ENCODE measurements at regions of chr10 and their contacts with region 1.

Region 1: GRCh38 chr10:102245101-102245931 is at the start of gene GBF1:
- DNase-seq: peak; percentile 96 to 97
- H3K4me3 ChIP-seq: peak within 1 kb of the TSS; percentile 73
- H3K4me3 Mint-ChIP-seq: peak within 1 kb of the TSS; percentile 94
- H3K27ac Mint-ChIP-seq: peak within 1 kb of the TSS; percentile 87
- H3K4me1 ChIP-seq: peaks cover 19% of the 10 kb centered on the region
- H3K4me1 Mint-ChIP-seq: peaks cover 46% of the 10 kb centered on the region
- H3K27me3 ChIP-seq: no peaks in the 10 kb centered on the region
- H3K27me3 Mint-ChIP-seq: peaks cover 3% of the 10 kb centered on the region
- CTCF ChIP-seq: no peak
- total RNA-seq, gene GBF1: 69.1 and 69.8 TPM in 2 replicates

Region 2: GRCh38 chr10:100803492-100803891 is 1441.8 kb before region 1 on chr10:
- CTCF ChIA-PET with region 1: no interaction called
- POLR2A ChIA-PET with region 1: no interaction called
- intact Hi-C with region 1: no loop called
- DNase-seq: no peak
- H3K4me3 ChIP-seq: no peak overlapping the region
- H3K4me3 Mint-ChIP-seq: no peak overlapping the region
- H3K27ac Mint-ChIP-seq: no peak overlapping the region
- H3K4me1 ChIP-seq: no peaks in the 10 kb centered on the region
- H3K4me1 Mint-ChIP-seq: peaks cover 14% of the 10 kb centered on the region
- H3K27me3 ChIP-seq: no peaks in the 10 kb centered on the region; the same call in 1 of the 2 replicates
- H3K27me3 Mint-ChIP-seq: peaks cover 14% of the 10 kb centered on the region
- CTCF ChIP-seq: no peak

Region 3: GRCh38 chr10:101478956-101479355 is 766.4 kb before region 1 on chr10:
- CTCF ChIA-PET with region 1: no interaction called
- POLR2A ChIA-PET with region 1: no interaction called
- intact Hi-C with region 1: no loop called
- DNase-seq: no peak
- H3K4me3 ChIP-seq: no peak overlapping the region
- H3K4me3 Mint-ChIP-seq: no peak overlapping the region
- H3K27ac Mint-ChIP-seq: no peak overlapping the region
- H3K4me1 ChIP-seq: no peaks in the 10 kb centered on the region
- H3K4me1 Mint-ChIP-seq: no peaks in the 10 kb centered on the region
- H3K27me3 ChIP-seq: no peaks in the 10 kb centered on the region
- H3K27me3 Mint-ChIP-seq: no peaks in the 10 kb centered on the region
- CTCF ChIP-seq: no peak

Region 4: GRCh38 chr10:102151774-102152544 is 93.4 kb before region 1 on chr10 and contains the start of gene NOLC1:
- CTCF ChIA-PET with region 1: no interaction called
- POLR2A ChIA-PET with region 1: interaction called, 5 read pairs
- intact Hi-C with region 1: loop called (anchors 5 kb)
- DNase-seq: peak; percentile 99
- H3K4me3 ChIP-seq: peak within 1 kb of the TSS; percentile 87
- H3K4me3 Mint-ChIP-seq: peak within 1 kb of the TSS; percentile 91
- H3K27ac Mint-ChIP-seq: peak within 1 kb of the TSS; percentile 99
- H3K4me1 ChIP-seq: peaks cover 26% of the 10 kb centered on the region
- H3K4me1 Mint-ChIP-seq: peaks cover 30% of the 10 kb centered on the region
- H3K27me3 ChIP-seq: no peaks in the 10 kb centered on the region
- H3K27me3 Mint-ChIP-seq: no peaks in the 10 kb centered on the region
- CTCF ChIP-seq: no peak
- total RNA-seq, gene NOLC1: 137 and 147 TPM in 2 replicates

Region 5: DNA sequence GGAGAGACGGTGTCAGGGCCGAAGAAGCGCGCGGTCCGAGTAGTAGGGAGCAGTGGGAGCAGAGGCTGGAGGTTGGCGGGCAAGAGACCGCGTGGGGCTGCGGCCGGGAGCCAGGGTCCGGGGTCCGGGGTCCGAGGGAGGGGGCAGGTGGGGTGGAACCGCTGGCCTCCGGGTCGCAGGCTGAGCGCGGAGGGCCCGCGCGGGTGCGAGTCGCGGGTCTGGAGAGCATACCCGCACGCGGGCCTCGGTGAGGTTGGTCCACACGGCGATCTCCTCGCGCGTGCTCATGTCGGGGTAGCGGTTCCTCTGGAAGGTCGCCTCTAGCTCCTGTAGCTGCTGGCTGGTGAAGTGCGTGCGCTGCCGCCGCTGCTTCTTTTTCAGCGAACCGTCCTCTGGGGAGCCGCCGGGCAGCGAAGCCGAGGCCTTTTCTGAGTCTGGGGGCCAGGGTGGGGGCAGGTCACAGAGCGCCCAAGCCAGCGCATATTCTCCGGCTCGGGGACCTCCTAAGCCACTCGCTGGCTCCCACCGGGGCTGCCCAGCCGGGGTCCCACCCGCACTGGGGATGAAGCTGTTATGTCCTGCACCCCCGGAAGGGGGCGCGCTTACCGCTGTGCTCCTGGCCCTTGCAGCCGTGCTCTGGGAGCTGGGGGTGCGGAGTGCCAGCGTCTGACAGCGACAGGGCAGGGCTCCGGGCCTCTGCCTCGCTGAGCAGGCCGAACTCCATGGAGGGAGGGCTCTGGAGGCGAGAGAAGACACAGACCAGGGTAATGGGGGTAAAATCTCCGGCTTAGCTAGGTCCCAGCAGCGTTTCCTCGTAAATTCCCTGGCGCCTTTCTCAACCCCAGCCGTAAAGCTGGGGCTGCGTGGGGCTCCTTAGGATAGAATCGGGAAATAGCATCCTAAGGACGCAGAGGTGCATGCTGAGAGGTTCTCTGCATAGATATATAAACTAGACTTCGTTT is 13.7 kb before region 1 on chr10:
- CTCF ChIA-PET with region 1: interaction called, 19 read pairs
- POLR2A ChIA-PET with region 1: interaction called, 12 read pairs
- intact Hi-C with region 1: no loop called
- DNase-seq: peak; percentile 58 to 77
- H3K4me3 ChIP-seq: peak overlapping the region; percentile 47
- H3K4me3 Mint-ChIP-seq: peak overlapping the region; percentile 71
- H3K27ac Mint-ChIP-seq: no peak overlapping the region
- H3K4me1 ChIP-seq: peaks cover 15% of the 10 kb centered on the region
- H3K4me1 Mint-ChIP-seq: no peaks in the 10 kb centered on the region
- H3K27me3 ChIP-seq: peaks cover 1% of the 10 kb centered on the region; the same call in 1 of the 2 replicates
- H3K27me3 Mint-ChIP-seq: peaks cover 22% of the 10 kb centered on the region
- CTCF ChIP-seq: peak; percentile 81 to 88

Region 6: GRCh38 chr10:102261196-102261595 is 15.9 kb after region 1 on chr10:
- CTCF ChIA-PET with region 1: no interaction called
- POLR2A ChIA-PET with region 1: no interaction called
- intact Hi-C with region 1: no loop called
- DNase-seq: no peak
- H3K4me3 ChIP-seq: no peak overlapping the region
- H3K4me3 Mint-ChIP-seq: no peak overlapping the region
- H3K27ac Mint-ChIP-seq: no peak overlapping the region
- H3K4me1 ChIP-seq: no peaks in the 10 kb centered on the region
- H3K4me1 Mint-ChIP-seq: peaks cover 7% of the 10 kb centered on the region
- H3K27me3 ChIP-seq: no peaks in the 10 kb centered on the region
- H3K27me3 Mint-ChIP-seq: no peaks in the 10 kb centered on the region
- CTCF ChIP-seq: no peak

Region 7: GRCh38 chr10:102352066-102352715 is 106.9 kb after region 1 on chr10:
- CTCF ChIA-PET with region 1: interaction called, 8 read pairs
- POLR2A ChIA-PET with region 1: interaction called, 3 read pairs
- intact Hi-C with region 1: loop called (anchors 5 kb)
- DNase-seq: peak; percentile 68 to 74
- H3K4me3 ChIP-seq: no peak overlapping the region
- H3K4me3 Mint-ChIP-seq: no peak overlapping the region
- H3K27ac Mint-ChIP-seq: peak overlapping the region; percentile 53
- H3K4me1 ChIP-seq: no peaks in the 10 kb centered on the region
- H3K4me1 Mint-ChIP-seq: no peaks in the 10 kb centered on the region
- H3K27me3 ChIP-seq: no peaks in the 10 kb centered on the region
- H3K27me3 Mint-ChIP-seq: no peaks in the 10 kb centered on the region
- CTCF ChIP-seq: peak; percentile 87 to 92

Region 8: GRCh38 chr10:102743588-102744373 is 498.5 kb after region 1 on chr10 and contains the start of gene WBP1L:
- CTCF ChIA-PET with region 1: no interaction called
- POLR2A ChIA-PET with region 1: no interaction called
- intact Hi-C with region 1: loop called (anchors 5 kb)
- DNase-seq: peak; percentile 98
- H3K4me3 ChIP-seq: peak within 1 kb of the TSS; percentile 76
- H3K4me3 Mint-ChIP-seq: peak within 1 kb of the TSS; percentile 75
- H3K27ac Mint-ChIP-seq: peak within 1 kb of the TSS; percentile 74
- H3K4me1 ChIP-seq: peaks cover 18% of the 10 kb centered on the region
- H3K4me1 Mint-ChIP-seq: peaks cover 7% of the 10 kb centered on the region
- H3K27me3 ChIP-seq: no peaks in the 10 kb centered on the region
- H3K27me3 Mint-ChIP-seq: no peaks in the 10 kb centered on the region
- CTCF ChIP-seq: no peak
- total RNA-seq, gene WBP1L: 26.3 and 28.2 TPM in 2 replicates

Measured in Caco-2 (cell line).